ENCODE measurements at regions of chr1 and their contacts with region 1.

Region 1: DNA sequence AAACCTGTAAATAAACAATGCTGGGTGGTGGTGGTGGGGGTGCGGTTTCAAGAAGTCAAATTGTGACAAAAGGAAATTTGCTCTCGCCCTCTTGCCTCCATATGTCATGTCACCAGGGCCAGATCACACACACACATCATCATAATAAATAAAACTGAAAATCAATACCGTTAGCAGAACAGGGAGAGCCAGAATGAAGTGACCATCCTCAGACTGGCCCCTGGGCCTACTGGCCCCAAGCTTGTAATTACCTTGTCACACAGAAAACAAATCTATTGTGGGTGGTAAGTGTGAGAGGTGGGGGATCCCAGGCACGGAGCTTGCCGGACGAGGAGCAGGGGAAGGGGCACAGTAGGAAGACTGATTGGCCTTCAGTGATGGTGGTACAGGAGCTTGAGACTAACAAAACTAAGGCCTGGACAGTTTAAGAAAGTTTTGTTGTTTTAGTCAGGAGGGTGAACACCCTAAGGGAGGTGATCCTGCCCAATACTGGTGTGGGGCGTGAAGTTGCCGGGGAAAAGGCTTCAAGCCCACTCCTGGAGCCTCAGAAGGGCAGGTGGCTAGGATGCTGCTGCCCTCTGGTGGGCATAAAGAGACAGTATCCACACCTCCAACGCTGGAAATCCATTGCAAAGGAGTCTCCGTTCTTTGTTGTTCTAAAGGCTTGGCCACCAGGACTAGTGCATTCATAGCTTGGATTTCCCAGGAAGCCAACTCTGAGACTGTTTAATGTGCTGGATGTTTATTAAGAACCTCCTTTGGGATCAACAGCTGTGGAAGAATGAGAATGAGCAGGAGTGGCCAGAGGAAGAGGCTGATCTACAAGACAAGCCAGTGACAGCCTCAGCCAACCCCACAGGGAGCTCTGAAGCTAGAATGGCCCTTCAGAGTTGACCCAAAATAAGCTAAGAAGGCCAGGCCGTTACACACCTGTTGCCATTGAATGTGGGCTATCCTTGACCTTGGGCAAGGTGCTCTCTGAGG is 8.1 kb upstream of the C1orf216 start:
- DNase-seq: peak; percentile 20
- H3K4me3 Mint-ChIP-seq: no peak overlapping the region
- H3K27ac Mint-ChIP-seq: no peak overlapping the region
- H3K4me1 Mint-ChIP-seq: peaks cover 9% of the 10 kb centered on the region
- H3K27me3 Mint-ChIP-seq: no peaks in the 10 kb centered on the region

Region 2: DNA sequence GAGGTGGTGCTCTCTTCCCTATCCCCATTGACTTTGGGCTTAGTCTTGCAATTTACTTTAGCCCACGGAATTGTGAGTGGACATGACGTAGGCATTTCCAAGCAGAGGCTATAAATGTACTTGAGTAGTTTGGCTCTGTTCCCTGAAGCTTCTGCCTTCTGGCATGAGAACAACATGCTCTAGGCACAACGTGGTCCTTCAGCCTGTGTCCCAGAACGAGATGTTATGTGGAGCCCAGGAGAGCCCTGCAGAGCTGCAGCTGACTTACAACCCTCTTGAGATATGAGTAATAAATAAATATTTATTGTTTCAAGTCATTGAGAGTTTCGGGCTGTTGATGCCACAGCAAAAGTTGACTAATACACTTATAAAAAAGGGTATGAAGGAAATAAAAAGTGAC is 1968.0 kb before region 1 on chr1:
- intact Hi-C with region 1: no loop called
- DNase-seq: no peak
- H3K4me3 Mint-ChIP-seq: no peak overlapping the region
- H3K27ac Mint-ChIP-seq: no peak overlapping the region
- H3K4me1 Mint-ChIP-seq: no peaks in the 10 kb centered on the region
- H3K27me3 Mint-ChIP-seq: peaks cover 4% of the 10 kb centered on the region

Region 3: GRCh38 chr1:35564037-35564883 is 162.5 kb before region 1 on chr1:
- intact Hi-C with region 1: loop called (anchors 1 kb)
- DNase-seq: peak; percentile 69
- H3K4me3 Mint-ChIP-seq: peak overlapping the region; percentile 3
- H3K27ac Mint-ChIP-seq: no peak overlapping the region
- H3K4me1 Mint-ChIP-seq: peaks cover 42% of the 10 kb centered on the region
- H3K27me3 Mint-ChIP-seq: no peaks in the 10 kb centered on the region

Measured in activated T-helper 1 cell treated with anti-CD3 and anti-CD28 coated beads, Interleukin-12 subunit alpha, Interleukin-12 subunit beta, Interleukin-2, Interleukin-4 antibody, amounts not matched to agents 30 ng/mL and 10 ng/mL and 1 ng/mL, durations not matched to agents 14 hours and 24 hours and 36 hours (primary cell).